ENCODE measurements at regions of chr20 and their contacts with region 1.

Region 1: DNA sequence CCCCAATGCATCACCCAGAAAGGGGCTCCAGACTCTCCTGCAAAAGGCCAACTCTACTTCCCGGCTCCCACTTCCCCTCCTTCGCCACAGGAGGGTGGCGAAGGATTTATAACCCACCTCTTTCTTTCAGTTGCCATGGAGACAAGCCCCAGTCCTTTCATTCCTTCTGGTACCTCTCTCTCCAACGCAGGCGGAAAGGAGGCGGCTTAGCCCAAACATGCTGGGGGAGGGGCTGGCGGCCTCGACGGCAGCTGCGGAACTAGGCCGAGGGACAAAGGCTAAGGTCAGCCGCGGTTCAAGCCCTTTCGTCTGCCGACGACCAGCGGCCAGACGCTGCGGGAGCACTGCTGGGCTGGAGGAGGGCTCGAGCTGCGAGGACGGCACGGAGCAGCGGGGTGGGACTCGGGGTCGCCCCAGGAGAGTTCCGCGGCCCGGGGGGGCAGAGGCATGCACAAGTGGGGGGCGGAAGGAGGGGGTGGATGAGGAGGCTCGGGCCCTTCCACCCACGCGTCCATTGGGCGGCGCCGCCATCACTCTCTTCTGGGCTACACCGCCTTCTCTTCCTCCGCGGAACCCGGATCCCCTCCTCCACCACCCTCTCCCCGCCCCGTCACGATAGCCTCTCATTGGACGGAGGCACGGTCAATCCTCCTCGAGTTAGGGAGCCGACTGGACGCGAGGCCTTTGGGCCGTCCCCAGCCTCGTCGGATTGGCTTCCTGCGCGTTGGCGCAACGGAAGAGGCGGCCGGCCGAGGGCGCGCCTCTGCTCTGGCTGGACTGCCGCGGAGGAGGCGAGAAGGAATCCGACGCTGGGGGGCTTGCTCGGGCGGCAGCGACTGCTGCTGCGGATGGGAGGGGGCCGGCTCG is at the start of gene PANK2:
- DNase-seq: peak; percentile 100
- H3K4me3 ChIP-seq: peak within 1 kb of the TSS; percentile 83 to 97 (median 89)
- H3K27ac ChIP-seq: peak within 1 kb of the TSS; percentile 95 to 98 (median 96)
- H3K4me1 ChIP-seq: peaks cover 0 to 48% (median 42%) of the 10 kb centered on the region in 4 donors
- H3K27me3 ChIP-seq: no peaks in the 10 kb centered on the region
- CTCF ChIP-seq: peak; percentile 24 to 58 (median 43)
- EP300 ChIP-seq: no peak
- POLR2A ChIP-seq: peak; percentile 85 to 89
- total RNA-seq, gene PANK2: 35.1 to 43.2 (median 39.0) TPM

Region 2: GRCh38 chr20:2873010-2873746 is 1015.7 kb before region 1 on chr20 and contains the start of gene PTPRA:
- intact Hi-C with region 1: loop called (anchors 5 kb)
- DNase-seq: peak; percentile 95
- H3K4me3 ChIP-seq: peak within 1 kb of the TSS; percentile 88 to 98 (median 94)
- H3K27ac ChIP-seq: peak within 1 kb of the TSS; percentile 78 to 91 (median 86)
- H3K4me1 ChIP-seq: peaks cover 0 to 44% (median 31%) of the 10 kb centered on the region in 4 donors
- H3K27me3 ChIP-seq: peaks cover 0 to 14% (median 0%) of the 10 kb centered on the region in 3 donors
- CTCF ChIP-seq: no peak
- EP300 ChIP-seq: no peak
- POLR2A ChIP-seq: peak; percentile 49
- total RNA-seq, gene PTPRA: 62.0 to 86.4 (median 73.6) TPM

Region 3: DNA sequence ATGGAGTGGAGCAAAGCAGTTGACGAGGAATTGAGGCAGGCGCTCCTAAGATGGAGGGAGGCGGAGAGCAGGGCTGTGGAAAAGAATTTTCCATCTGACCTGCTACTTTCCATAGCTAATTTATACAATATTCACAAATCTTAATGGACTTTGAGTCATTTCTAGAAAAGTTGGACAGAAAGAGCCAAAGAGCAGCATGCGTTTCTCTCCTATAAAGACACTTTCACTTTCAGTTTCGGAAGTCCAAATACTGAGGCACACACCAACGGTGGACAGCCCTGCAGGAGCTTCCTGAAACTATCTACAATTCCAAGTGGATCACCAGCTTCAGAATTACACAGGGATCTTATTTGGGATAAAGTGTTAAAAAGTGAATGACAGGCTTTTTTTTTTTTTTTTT is 43.8 kb after region 1 on chr20:
- intact Hi-C with region 1: loop called (anchors 2 kb)
- DNase-seq: no peak
- H3K4me3 ChIP-seq: peak overlapping the region; percentile 26 to 51 (median 46)
- H3K27ac ChIP-seq: peak overlapping the region; percentile 67 to 74 (median 70)
- H3K4me1 ChIP-seq: peaks cover 0 to 46% (median 42%) of the 10 kb centered on the region in 4 donors
- H3K27me3 ChIP-seq: no peaks in the 10 kb centered on the region
- CTCF ChIP-seq: no peak
- EP300 ChIP-seq: no peak
- POLR2A ChIP-seq: no peak

Region 4: DNA sequence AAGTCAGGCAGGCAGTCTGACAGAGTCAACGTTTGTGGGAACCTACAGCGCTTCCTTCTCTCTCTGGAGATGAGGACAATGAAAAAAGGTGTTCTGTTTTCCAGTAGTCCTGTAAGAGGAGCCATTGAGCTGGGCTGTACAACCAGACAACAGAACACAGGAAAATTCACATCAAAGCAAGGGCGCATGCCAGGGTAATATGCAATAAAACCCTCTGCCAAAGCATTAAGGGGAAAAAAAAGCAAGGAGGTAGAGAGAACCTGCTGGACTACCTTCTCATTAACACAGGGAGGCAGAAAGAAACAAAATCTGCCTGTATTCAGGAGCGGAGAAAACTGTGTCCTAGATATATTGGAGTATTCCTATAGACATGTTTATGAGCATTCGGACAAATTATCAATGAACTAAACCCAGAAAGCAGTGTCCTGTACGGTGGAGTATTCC is 125.2 kb after region 1 on chr20:
- intact Hi-C with region 1: loop called (anchors 2 kb)
- DNase-seq: no peak
- H3K4me3 ChIP-seq: peak overlapping the region in 2 of 4 donors; percentile 68 to 90
- H3K27ac ChIP-seq: peak overlapping the region; percentile 8 to 86 (median 82)
- H3K4me1 ChIP-seq: peaks cover 0 to 21% (median 18%) of the 10 kb centered on the region in 4 donors
- H3K27me3 ChIP-seq: no peaks in the 10 kb centered on the region
- CTCF ChIP-seq: peak in 3 of 4 experiments; percentile 30 to 52 (median 36)
- EP300 ChIP-seq: no peak
- POLR2A ChIP-seq: no peak